T-cell (primary cell): ENCODE measurements at regions of chr5 and their contacts with region 1.

Region 1: GRCh38 chr5:77143998-77144836 is 57.1 kb upstream of the ZBED3 start:
- DNase-seq: peak; percentile 9 to 77 (median 49)
- ATAC-seq: peak in 3 of 4 experiments; percentile 54 to 69 (median 68)
- H3K4me3 ChIP-seq: no peak overlapping the region
- H3K4me3 Mint-ChIP-seq: no peak overlapping the region
- H3K27ac ChIP-seq: no peak overlapping the region
- H3K27ac Mint-ChIP-seq: no peak overlapping the region
- H3K4me1 ChIP-seq: no peaks in the 10 kb centered on the region
- H3K4me1 Mint-ChIP-seq: peaks cover 7 to 21% (median 18%) of the 10 kb centered on the region in 3 donors
- H3K27me3 ChIP-seq: no peaks in the 10 kb centered on the region
- H3K27me3 Mint-ChIP-seq: peaks cover 3 to 9% of the 10 kb centered on the region in 2 donors

Region 2: DNA sequence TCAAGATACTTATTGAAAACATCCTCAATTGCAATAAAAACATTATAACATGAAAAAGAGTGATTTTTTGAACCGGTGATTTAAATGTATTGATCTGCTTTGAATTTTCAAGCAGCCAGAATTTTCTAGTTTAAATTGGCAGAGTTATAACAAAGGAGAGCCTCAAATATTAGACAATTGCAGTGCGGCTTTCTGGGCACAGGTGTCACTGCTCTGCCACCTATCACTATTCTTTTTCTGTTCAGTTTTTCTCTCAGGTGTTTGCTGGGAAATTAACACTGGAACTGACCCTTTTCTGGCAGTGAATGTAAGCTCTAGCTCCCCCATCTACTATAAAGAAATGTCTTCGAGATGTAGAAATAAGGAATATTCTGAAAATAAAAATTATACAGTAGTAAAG is 80.2 kb before region 1 on chr5:
- CTCF ChIA-PET with region 1: no interaction called
- POLR2A ChIA-PET with region 1: no interaction called
- DNase-seq: peak in 1 of 35 experiments; percentile 10
- ATAC-seq: no peak
- H3K4me3 ChIP-seq: no peak overlapping the region
- H3K4me3 Mint-ChIP-seq: no peak overlapping the region
- H3K27ac ChIP-seq: no peak overlapping the region
- H3K27ac Mint-ChIP-seq: no peak overlapping the region
- H3K4me1 ChIP-seq: no peaks in the 10 kb centered on the region
- H3K4me1 Mint-ChIP-seq: peaks cover 5 to 13% (median 9%) of the 10 kb centered on the region in 3 donors
- H3K27me3 ChIP-seq: no peaks in the 10 kb centered on the region
- H3K27me3 Mint-ChIP-seq: no peaks in the 10 kb centered on the region

Region 3: DNA sequence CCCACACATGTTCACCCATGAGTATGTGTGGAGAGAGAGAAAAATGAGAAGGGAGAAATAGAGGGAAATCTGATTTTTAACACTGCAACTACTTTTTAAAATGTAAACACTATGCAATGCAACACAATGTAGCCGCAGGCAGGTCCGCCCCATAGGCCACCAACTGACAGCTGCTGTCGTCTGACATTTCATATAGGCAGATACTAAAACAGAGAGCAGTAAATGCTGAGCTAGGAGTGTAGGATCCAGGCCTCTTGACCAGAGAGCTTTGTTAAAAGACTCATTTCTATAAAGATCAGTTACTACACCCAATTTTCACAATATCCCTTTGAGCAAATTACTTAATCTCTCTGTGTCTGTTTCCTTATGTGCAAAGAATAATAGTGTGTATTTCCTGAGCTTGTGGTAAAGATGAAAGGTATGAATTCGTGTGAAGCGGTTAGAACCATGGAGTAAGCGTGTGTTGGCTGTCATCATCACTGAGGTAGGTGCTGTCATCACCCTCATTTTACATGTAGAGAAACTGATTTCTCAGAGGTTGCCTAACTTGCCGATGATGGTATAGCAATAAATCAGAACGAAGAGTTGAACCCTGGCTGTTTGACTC is 11.1 kb after region 1 on chr5:
- CTCF ChIA-PET with region 1: interaction called in 1 of 2 experiments, 20 read pairs
- POLR2A ChIA-PET with region 1: interaction called in 1 of 2 experiments, 6 read pairs
- DNase-seq: peak in 31 of 35 experiments; percentile 15 to 86 (median 55)
- ATAC-seq: peak; percentile 87 to 98 (median 96)
- H3K4me3 ChIP-seq: no peak overlapping the region
- H3K4me3 Mint-ChIP-seq: peak overlapping the region in 1 of 3 donors; percentile 60
- H3K27ac ChIP-seq: no peak overlapping the region
- H3K27ac Mint-ChIP-seq: peak overlapping the region; percentile 55 to 79
- H3K4me1 ChIP-seq: peaks cover 23 to 29% of the 10 kb centered on the region in 2 experiments
- H3K4me1 Mint-ChIP-seq: peaks cover 30 to 37% (median 33%) of the 10 kb centered on the region in 3 donors
- H3K27me3 ChIP-seq: peaks cover 0 to 2% of the 10 kb centered on the region in 2 experiments
- H3K27me3 Mint-ChIP-seq: peaks cover 0 to 3% of the 10 kb centered on the region in 2 donors

Region 4: DNA sequence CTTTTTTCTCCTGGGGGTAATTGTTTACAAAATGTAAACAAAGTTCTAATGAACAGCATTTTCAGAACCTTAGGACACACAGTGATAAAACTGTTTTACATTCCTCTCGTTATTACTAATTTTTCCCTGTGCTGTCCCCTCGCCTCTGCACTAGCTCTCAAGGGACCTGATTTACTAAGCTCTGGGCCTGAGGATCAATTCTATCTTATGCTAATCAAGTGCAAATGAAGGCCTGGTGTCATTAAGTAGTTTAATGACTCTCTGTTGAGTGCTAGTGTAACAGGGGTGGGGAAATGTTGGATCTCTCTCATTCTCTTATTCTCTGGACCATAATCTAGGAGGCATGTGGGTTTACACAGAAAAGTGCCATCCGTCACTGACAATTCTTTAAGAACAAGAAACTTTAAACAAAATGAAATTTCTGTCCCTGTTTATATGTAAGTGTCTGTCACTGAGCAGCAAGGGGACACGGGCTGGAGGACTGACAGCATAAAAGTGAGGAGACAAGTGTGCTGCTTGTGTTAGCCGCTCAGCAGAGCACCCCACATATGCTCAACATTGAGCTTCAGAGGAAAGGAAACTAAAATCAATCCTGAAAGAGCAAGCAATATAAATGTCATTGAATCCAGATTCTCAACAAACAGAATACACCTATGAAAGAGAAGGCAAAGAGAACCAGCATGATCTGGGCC is 232.5 kb after region 1 on chr5:
- CTCF ChIA-PET with region 1: interaction called in 1 of 2 experiments, 12 read pairs
- POLR2A ChIA-PET with region 1: no interaction called
- DNase-seq: no peak
- ATAC-seq: no peak
- H3K4me3 ChIP-seq: no peak overlapping the region
- H3K4me3 Mint-ChIP-seq: no peak overlapping the region
- H3K27ac ChIP-seq: no peak overlapping the region
- H3K27ac Mint-ChIP-seq: no peak overlapping the region
- H3K4me1 ChIP-seq: peaks cover 0 to 4% of the 10 kb centered on the region in 2 experiments
- H3K4me1 Mint-ChIP-seq: peaks cover 26 to 29% (median 29%) of the 10 kb centered on the region in 3 donors
- H3K27me3 ChIP-seq: peaks cover 0 to 4% of the 10 kb centered on the region in 2 experiments
- H3K27me3 Mint-ChIP-seq: peaks cover 0 to 6% of the 10 kb centered on the region in 2 donors